Activated T-helper 1 cell treated with anti-CD3 and anti-CD28 coated beads, Interleukin-12 subunit alpha, Interleukin-12 subunit beta, Interleukin-2, Interleukin-4 antibody, amounts not matched to agents 30 ng/mL and 10 ng/mL and 1 ng/mL, durations not matched to agents 14 hours and 24 hours and 36 hours (primary cell): ENCODE measurements at regions of chr17 and their contacts with region 1.

Region 1: DNA sequence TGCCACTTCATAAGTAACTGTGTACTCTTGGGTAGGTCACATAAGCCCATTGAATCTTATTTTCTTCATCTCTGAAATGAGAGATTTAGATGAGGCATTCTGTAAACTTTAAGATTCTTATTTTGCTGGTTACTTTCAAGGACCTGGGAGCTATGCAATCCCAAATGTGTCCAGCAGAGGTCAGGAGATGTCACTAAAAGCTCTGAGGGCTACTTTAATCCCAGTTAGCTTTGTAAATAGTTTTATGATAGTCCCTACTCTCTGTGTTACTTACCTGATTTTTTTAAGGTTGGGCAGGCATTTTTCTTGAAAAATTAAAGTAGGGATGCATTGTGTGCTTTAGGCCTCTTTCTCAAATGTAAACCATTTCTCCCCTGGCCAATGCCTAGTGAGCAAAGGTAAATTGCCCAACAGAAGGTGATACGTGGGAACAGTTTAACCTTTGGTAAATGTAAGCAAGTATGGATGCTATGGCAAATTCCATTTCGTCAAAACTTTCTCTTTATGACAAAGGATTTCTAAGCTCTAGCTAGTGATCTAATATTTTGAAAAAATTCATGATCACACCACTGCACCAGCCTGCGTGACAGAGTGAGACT is 57.1 kb upstream of the WSB1 start:
- DNase-seq: peak; percentile 51
- H3K4me3 Mint-ChIP-seq: no peak overlapping the region
- H3K27ac Mint-ChIP-seq: no peak overlapping the region
- H3K4me1 Mint-ChIP-seq: peaks cover 21% of the 10 kb centered on the region
- H3K27me3 Mint-ChIP-seq: peaks cover 22% of the 10 kb centered on the region

Region 2: DNA sequence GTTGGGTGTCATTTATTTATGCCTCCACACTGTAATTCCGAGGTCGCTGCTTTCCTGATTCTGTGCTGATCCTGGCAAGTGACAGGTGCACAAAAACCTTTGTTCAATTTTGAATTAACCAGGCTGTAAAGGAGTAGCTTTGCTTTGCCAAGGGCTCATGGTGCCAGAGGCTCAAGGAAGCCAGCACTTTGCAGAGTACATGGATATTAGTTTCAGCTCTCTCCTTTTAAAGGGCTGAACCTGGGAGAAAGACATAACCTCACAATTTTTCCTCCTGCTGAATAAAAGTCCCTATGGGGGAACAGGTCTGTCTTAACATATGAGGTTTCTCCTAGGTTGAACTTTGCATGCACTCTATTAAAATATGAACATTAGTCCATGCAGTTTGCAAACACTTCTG is 170.5 kb before region 1 on chr17:
- intact Hi-C with region 1: no loop called
- DNase-seq: no peak
- H3K4me3 Mint-ChIP-seq: no peak overlapping the region
- H3K27ac Mint-ChIP-seq: no peak overlapping the region
- H3K4me1 Mint-ChIP-seq: no peaks in the 10 kb centered on the region
- H3K27me3 Mint-ChIP-seq: peaks cover 4% of the 10 kb centered on the region

Region 3: GRCh38 chr17:27332485-27333409 is 95.9 kb after region 1 on chr17:
- intact Hi-C with region 1: loop called (anchors 1 kb)
- DNase-seq: peak; percentile 81
- H3K4me3 Mint-ChIP-seq: peak overlapping the region; percentile 77
- H3K27ac Mint-ChIP-seq: peak overlapping the region; percentile 95
- H3K4me1 Mint-ChIP-seq: peaks cover 20% of the 10 kb centered on the region
- H3K27me3 Mint-ChIP-seq: peaks cover 3% of the 10 kb centered on the region

Region 4: DNA sequence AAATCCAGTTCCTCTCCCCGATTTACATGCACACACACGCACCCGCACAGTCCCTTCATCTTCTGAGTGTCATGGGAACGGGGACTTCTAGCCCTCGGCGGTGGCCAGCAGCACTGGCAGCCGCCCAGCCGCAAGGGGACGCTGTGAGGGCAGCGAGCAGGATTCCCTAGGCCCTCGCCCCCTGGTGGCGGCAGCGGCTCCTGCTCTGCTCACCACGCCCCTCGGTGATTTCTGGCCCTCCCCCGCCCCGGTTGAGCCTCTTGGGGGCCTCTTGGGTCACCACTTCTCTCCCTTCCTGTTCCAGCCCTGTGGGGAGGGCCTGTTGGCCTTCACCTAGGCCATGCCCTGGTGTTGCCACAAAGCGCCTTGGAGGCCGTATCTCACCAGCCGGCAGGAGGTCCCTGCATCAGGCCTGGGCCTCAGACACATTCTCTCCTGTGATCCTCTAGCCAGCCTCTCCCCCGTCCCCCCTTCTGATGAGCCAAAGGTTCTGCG is 144.2 kb after region 1 on chr17:
- intact Hi-C with region 1: loop called (anchors 1 kb)
- DNase-seq: peak; percentile 72
- H3K4me3 Mint-ChIP-seq: no peak overlapping the region
- H3K27ac Mint-ChIP-seq: no peak overlapping the region
- H3K4me1 Mint-ChIP-seq: peaks cover 7% of the 10 kb centered on the region
- H3K27me3 Mint-ChIP-seq: peaks cover 29% of the 10 kb centered on the region

Region 5: DNA sequence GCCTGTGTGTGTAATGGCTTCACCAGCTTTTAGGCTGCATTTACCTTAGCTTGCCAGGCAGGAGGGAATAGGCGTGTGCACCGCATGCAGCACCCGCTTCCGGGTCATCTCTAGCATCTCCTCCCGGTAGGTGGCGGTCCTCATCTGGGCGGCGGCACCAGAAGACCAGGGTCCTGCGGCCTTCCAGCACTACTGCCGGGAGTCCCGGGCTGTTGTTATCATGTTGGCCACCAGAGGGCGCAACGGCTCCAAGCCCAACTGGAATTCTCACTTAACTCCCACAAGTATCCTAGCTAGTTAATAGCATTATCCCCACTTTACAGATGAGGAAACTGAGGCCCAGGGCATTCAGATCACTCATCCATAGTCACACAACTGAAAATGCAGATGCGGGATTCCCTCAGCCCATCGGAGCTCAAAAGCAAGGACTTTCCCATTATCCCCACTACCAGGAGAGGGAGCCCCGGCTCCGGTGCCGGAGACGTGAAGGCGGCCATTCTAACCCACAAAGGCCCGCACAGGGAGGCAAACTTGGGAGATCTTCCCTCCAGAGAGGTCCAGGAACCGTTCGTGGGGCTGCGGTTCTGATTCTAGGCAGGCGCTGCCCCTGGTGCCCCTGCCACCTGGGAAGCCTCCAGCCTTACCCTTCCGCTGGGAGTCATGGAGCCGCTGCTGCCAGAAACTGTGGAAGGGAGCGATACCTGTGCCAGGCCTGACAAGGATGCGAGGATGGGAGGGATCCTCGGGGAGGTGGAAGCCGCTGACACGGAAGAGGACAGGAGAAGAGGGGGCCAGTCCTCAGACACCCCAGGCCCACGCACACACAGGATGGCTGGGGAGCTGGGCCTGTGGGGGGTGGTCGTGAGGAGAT is 418.1 kb after region 1 on chr17:
- intact Hi-C with region 1: loop called (anchors 1 kb)
- DNase-seq: peak; percentile 49
- H3K4me3 Mint-ChIP-seq: no peak overlapping the region
- H3K27ac Mint-ChIP-seq: no peak overlapping the region
- H3K4me1 Mint-ChIP-seq: peaks cover 13% of the 10 kb centered on the region
- H3K27me3 Mint-ChIP-seq: no peaks in the 10 kb centered on the region